ENCODE measurements at regions of chr19 and their contacts with region 1.

Region 1: GRCh38 chr19:56367829-56368711 is 25.3 kb downstream of the ZNF582 start:
- DNase-seq: peak; percentile 89
- ATAC-seq: peak; percentile 92
- H3K4me3 ChIP-seq: peak overlapping the region; percentile 59
- H3K27ac ChIP-seq: peak overlapping the region; percentile 70
- H3K4me1 ChIP-seq: no peaks in the 10 kb centered on the region
- H3K27me3 ChIP-seq: no peaks in the 10 kb centered on the region
- CTCF ChIP-seq: no peak
- POLR2A ChIP-seq: peak; percentile 65
- RAD21 ChIP-seq: no peak

Region 2: DNA sequence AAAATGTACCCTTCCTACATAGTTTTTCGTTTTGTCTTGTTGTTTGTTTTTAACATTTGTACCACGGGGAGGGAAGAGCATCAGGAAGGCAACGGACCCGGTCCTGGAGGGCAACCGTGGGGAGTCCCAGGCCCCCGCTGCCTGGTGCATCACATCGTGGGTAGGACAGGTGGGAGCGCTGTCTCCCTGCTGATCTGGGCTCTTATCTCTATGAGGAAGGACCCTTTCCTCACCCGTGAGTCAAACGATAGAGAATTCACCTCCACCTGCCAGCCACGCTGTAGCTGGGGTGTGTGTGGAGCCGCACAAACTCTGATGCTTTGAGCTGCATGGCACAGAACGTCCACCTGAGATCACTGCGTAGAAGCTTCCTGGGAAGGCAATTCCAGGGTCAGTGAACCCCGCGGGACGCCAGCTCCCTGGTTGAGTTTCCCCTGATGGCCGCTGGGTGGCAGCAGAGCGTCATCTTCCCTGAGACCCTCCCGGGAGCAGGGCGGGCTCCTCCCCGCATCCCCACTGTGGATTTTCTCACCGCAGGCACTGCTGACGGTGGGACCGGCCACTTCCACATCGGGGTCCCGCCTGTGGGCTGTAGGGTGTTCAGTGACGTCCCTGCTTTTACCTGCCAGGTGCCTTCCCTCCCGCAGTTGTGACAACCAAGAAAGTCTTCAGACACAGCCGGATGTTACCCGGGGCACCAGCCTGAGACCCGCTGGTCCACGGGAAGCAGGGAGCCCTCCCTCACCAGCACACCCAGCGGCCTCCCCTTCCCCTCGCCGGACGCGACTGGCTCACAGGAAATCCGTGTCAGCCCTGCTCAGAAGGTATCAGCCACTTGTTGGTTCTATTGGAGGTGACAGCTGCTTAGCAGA is 301.7 kb before region 1 on chr19:
- CTCF ChIA-PET with region 1: no interaction called
- POLR2A ChIA-PET with region 1: no interaction called
- dilution Hi-C with region 1: no loop called
- in situ Hi-C with region 1: no loop called
- intact Hi-C with region 1: no loop called
- DNase-seq: peak; percentile 19
- ATAC-seq: peak; percentile 97
- H3K4me3 ChIP-seq: peak overlapping the region; percentile 10; the same call in 1 of the 2 replicates
- H3K27ac ChIP-seq: no peak overlapping the region
- H3K4me1 ChIP-seq: no peaks in the 10 kb centered on the region
- H3K27me3 ChIP-seq: no peaks in the 10 kb centered on the region; the same call in 1 of the 2 replicates
- CTCF ChIP-seq: peak; percentile 72
- POLR2A ChIP-seq: no peak
- RAD21 ChIP-seq: peak; percentile 67

Region 3: GRCh38 chr19:56393119-56394012 is 25.3 kb after region 1 on chr19 and contains the start of gene ZNF582:
- CTCF ChIA-PET with region 1: no interaction called
- POLR2A ChIA-PET with region 1: interaction called, 5 read pairs
- dilution Hi-C with region 1: no loop called
- in situ Hi-C with region 1: no loop called
- intact Hi-C with region 1: loop called (anchors 2 kb)
- DNase-seq: peak; percentile 95
- ATAC-seq: peak; percentile 99
- H3K4me3 ChIP-seq: peak within 1 kb of the TSS; percentile 60
- H3K27ac ChIP-seq: peak within 1 kb of the TSS; percentile 89
- H3K4me1 ChIP-seq: no peaks in the 10 kb centered on the region
- H3K27me3 ChIP-seq: no peaks in the 10 kb centered on the region
- CTCF ChIP-seq: peak; percentile 74
- POLR2A ChIP-seq: peak; percentile 54
- RAD21 ChIP-seq: peak; percentile 51
- total RNA-seq, gene ZNF582: 1.7 and 1.8 TPM in 2 replicates